GM10248 (cell line): ENCODE measurements at regions of chr1 and their contacts with region 1.

Region 1: GRCh38 chr1:161706482-161707347 is at the start of gene FCRLA:
- DNase-seq: peak; percentile 65
- CTCF ChIP-seq: no peak

Region 2: DNA sequence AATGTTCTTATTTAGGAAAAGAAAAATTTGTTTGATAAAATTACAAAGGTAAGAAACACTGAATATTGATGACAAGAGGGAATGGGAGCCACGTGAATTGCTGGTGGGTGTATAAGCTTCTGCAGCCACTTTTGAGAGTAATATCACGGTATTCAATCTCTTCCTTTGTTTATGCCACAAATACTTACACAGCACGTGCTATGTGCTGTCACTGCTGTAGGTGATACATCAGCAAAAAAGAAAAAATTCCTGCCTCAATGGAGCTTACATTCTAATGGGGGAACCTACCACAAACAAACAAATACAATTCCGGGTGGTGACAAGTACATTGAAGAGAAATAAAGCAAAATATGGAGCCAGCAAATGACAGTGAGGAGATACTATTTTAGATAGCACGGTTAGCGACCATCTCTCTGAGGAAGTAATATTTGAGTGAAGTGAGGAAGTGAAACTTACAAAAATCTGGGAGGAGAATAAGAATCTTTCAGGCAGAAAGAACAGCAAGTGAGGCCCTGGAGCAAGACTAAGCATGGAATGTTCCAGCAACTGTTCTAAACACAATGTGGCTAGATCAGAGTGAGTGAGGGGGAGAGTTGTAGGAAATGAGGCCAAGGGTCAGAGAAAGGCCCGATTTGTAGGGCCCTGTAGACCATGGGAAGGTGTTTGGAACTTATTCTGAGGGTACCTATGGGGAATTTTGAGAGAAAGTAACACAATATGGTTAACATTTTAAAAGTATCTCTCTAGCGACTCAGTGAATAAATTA is 12.0 kb after region 1 on chr1:
- CTCF ChIA-PET with region 1: interaction called, 12 read pairs
- POLR2A ChIA-PET with region 1: interaction called, 3 read pairs
- DNase-seq: peak; percentile 26
- CTCF ChIP-seq: no peak

Region 3: DNA sequence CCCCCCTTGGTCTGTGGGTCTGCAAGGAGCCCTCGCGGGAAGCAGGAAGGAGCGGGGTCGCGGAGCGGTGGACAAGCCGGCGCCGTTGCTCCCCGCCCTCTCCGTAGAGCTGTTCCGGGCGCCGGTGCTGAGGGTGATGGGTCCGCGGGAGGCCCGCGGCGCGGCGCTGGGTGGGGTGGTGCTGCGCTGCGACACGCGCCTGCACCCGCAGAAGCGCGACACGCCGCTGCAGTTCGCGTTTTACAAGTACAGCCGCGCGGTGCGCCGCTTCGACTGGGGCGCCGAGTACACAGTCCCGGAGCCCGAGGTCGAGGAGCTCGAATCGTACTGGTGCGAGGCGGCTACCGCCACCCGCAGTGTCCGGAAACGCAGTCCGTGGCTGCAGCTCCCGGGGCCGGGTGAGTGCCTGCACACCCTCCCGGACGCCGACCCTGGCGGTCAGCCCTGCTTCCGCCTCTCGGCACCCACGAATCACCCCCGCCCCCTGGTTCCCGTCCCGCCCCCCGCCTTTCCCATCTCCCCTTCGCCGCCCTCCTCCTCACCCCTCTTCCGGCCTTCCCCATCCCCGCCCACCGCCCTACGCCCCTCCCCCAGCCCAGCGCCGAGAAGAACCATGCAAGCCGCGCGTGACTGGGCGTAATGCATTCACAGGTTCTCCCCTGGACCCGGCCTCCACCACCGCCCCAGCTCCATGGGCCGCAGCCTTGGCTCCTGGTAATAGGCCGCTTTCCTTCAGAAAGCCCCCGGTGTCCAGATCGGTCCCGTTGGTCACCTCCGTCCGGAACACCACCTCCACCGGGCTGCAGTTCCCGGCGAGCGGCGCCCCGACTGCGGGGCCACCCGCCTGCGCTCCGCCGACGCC is 20.1 kb after region 1 on chr1:
- CTCF ChIA-PET with region 1: interaction called, 12 read pairs
- POLR2A ChIA-PET with region 1: interaction called, 3 read pairs
- DNase-seq: peak; percentile 89
- CTCF ChIP-seq: no peak

Region 4: GRCh38 chr1:161792740-161793139 is 86.0 kb after region 1 on chr1:
- CTCF ChIA-PET with region 1: no interaction called
- POLR2A ChIA-PET with region 1: no interaction called
- DNase-seq: peak; percentile 47
- CTCF ChIP-seq: peak; percentile 28

Region 5: GRCh38 chr1:161855260-161855659 is 148.5 kb after region 1 on chr1:
- CTCF ChIA-PET with region 1: no interaction called
- POLR2A ChIA-PET with region 1: no interaction called
- DNase-seq: no peak
- CTCF ChIP-seq: no peak

Region 6: GRCh38 chr1:161989108-161989507 is 282.4 kb after region 1 on chr1:
- CTCF ChIA-PET with region 1: no interaction called
- POLR2A ChIA-PET with region 1: no interaction called
- DNase-seq: no peak
- CTCF ChIP-seq: no peak